ENCODE measurements at regions of chr1 and their contacts with region 1.

Region 1: DNA sequence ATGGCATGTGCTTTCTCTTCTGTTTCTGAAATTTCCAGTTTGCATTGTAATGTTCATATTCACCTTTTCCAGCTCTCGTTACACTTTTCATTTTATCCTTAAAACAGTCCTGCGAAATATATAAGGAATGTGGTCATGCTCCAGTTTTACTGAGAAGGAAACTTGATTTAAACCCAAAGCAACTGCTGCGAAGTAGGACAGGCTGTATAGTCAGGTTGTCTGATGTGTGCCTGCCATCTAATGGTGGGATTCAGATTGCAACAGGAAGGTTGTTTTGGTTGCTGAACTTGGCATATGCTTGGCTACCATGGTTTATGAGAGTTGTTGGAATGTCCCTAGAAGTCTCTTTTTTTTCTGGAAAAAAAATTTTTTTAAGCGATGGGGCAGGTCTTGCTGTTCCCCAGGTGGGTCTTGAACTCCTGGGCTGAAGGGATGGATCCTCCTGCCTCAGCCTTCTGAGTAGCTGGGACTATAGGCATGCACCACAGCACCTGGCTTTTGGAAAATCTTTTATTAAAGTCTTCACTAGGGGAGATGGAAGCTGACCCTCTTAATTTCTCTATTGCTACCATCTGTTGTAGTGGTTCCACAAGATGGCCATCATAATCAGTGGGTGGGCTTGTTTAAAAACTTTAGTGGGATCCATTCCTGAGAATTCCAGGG is 86.9 kb downstream of the UCK2 start:
- DNase-seq: peak; percentile 42 to 83 (median 64)
- ATAC-seq: peak; percentile 96
- H3K4me3 ChIP-seq: no peak overlapping the region
- H3K4me3 Mint-ChIP-seq: no peak overlapping the region
- H3K27ac ChIP-seq: no peak overlapping the region
- H3K27ac Mint-ChIP-seq: no peak overlapping the region
- H3K4me1 ChIP-seq: no peaks in the 10 kb centered on the region
- H3K4me1 Mint-ChIP-seq: peaks cover 2% of the 10 kb centered on the region
- H3K27me3 ChIP-seq: no peaks in the 10 kb centered on the region
- H3K27me3 Mint-ChIP-seq: no peaks in the 10 kb centered on the region
- CTCF ChIP-seq: peak; percentile 96

Region 2: GRCh38 chr1:165392634-165393571 is 521.4 kb before region 1 on chr1:
- CTCF ChIA-PET with region 1: interaction called, 26 read pairs
- POLR2A ChIA-PET with region 1: no interaction called
- intact Hi-C with region 1: loop called (anchors 1 kb)
- DNase-seq: peak; percentile 81 to 95 (median 90)
- ATAC-seq: peak; percentile 99
- H3K4me3 ChIP-seq: no peak overlapping the region
- H3K4me3 Mint-ChIP-seq: peak overlapping the region; percentile 43
- H3K27ac ChIP-seq: no peak overlapping the region
- H3K27ac Mint-ChIP-seq: peak overlapping the region; percentile 64
- H3K4me1 ChIP-seq: peaks cover 15% of the 10 kb centered on the region
- H3K4me1 Mint-ChIP-seq: peaks cover 16% of the 10 kb centered on the region
- H3K27me3 ChIP-seq: peaks cover 8 to 13% of the 10 kb centered on the region in 2 experiments
- H3K27me3 Mint-ChIP-seq: peaks cover 62% of the 10 kb centered on the region
- CTCF ChIP-seq: peak; percentile 92

Region 3: DNA sequence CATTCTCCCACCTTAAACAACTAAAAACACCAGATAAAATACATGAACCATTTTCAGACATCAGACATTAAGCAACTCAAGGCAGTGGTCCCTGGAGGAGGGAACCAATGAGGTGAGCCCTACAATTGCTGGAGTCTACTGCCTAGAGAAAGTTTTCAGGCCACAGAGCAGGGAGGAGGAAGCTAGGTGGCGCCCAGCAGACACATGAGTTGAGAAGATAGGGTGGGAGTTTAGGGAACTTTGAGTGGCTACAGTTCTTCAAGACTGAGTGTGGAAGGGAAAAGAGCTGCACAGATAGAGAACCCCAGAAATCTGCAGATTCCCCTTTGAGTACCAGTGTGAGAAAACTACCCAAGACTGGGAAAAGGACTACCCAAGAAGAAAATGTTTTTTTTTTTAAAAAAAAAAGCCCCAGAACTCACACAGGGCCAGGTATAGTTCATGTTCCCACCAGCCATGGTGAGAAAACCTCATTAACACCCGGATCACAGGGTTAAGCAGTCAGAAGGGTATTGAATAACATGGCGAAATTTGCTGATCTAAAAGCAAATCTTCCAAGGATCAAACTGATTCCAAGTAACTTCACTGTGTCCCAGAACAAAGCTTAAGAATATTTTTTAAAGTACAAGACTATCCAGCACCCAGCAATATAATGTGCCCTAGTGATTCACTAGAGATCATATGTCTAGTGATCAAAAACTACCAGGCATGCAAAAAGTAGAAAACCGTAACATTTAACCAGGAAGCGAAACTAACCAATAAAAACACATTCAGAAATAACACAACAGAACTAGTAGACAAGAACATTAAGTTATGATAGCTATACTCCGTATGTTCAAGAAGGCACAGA is 227.9 kb before region 1 on chr1:
- CTCF ChIA-PET with region 1: interaction called, 3 read pairs
- POLR2A ChIA-PET with region 1: no interaction called
- intact Hi-C with region 1: loop called in 1 of 2 experiments (anchors 2 kb)
- DNase-seq: peak in 2 of 9 experiments; percentile 35 to 37
- ATAC-seq: peak; percentile 36
- H3K4me3 ChIP-seq: no peak overlapping the region
- H3K4me3 Mint-ChIP-seq: no peak overlapping the region
- H3K27ac ChIP-seq: peak overlapping the region in 1 of 2 experiments; percentile 38
- H3K27ac Mint-ChIP-seq: peak overlapping the region; percentile 74
- H3K4me1 ChIP-seq: peaks cover 14% of the 10 kb centered on the region
- H3K4me1 Mint-ChIP-seq: peaks cover 46% of the 10 kb centered on the region
- H3K27me3 ChIP-seq: no peaks in the 10 kb centered on the region
- H3K27me3 Mint-ChIP-seq: no peaks in the 10 kb centered on the region
- CTCF ChIP-seq: no peak

Region 4: GRCh38 chr1:165768513-165769394 is 145.5 kb before region 1 on chr1 and contains the start of gene TMCO1:
- CTCF ChIA-PET with region 1: interaction called, 4 read pairs
- POLR2A ChIA-PET with region 1: no interaction called
- intact Hi-C with region 1: loop called (anchors 1 to 2 kb)
- DNase-seq: peak; percentile 84 to 99 (median 92)
- ATAC-seq: peak; percentile 93
- H3K4me3 ChIP-seq: peak within 1 kb of the TSS; percentile 85 to 93
- H3K4me3 Mint-ChIP-seq: peak within 1 kb of the TSS; percentile 99
- H3K27ac ChIP-seq: peak within 1 kb of the TSS; percentile 71 to 96
- H3K27ac Mint-ChIP-seq: peak within 1 kb of the TSS; percentile 99
- H3K4me1 ChIP-seq: peaks cover 50% of the 10 kb centered on the region
- H3K4me1 Mint-ChIP-seq: peaks cover 65% of the 10 kb centered on the region
- H3K27me3 ChIP-seq: no peaks in the 10 kb centered on the region
- H3K27me3 Mint-ChIP-seq: no peaks in the 10 kb centered on the region
- CTCF ChIP-seq: peak; percentile 24
- total RNA-seq, gene TMCO1: 30.5 to 33.5 TPM

Region 5: DNA sequence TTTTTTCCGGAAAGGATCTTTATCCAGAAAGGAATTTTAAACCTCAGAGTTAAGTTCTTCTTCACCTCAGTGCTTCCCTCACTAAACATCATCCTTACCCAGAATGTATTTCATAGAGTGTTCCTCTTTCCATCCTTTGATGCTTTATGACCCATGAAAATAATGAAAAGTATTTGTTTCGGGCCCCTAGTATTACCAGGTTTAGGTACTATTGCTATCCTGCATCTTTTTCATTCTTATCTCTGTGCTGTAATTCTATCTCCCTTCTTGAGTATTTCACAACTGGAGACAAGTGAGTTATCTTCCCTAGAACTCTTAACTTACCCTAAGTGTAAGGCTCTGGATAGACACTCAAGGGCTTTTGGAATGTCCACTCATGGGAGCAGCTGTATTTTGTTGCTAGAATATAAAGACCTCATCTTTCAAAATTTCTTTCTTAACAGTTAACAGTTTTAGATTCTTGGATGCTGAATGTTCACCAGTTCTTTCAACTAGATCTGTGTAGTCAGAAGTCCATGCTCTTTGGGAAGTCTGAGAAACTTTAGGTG is 60.7 kb before region 1 on chr1:
- CTCF ChIA-PET with region 1: no interaction called
- POLR2A ChIA-PET with region 1: no interaction called
- intact Hi-C with region 1: no loop called
- DNase-seq: no peak
- ATAC-seq: no peak
- H3K4me3 ChIP-seq: no peak overlapping the region
- H3K4me3 Mint-ChIP-seq: no peak overlapping the region
- H3K27ac ChIP-seq: no peak overlapping the region
- H3K27ac Mint-ChIP-seq: no peak overlapping the region
- H3K4me1 ChIP-seq: peaks cover 8% of the 10 kb centered on the region
- H3K4me1 Mint-ChIP-seq: peaks cover 20% of the 10 kb centered on the region
- H3K27me3 ChIP-seq: no peaks in the 10 kb centered on the region
- H3K27me3 Mint-ChIP-seq: no peaks in the 10 kb centered on the region
- CTCF ChIP-seq: no peak

Region 6: GRCh38 chr1:165898837-165899236 is 15.4 kb before region 1 on chr1:
- CTCF ChIA-PET with region 1: interaction called, 55 read pairs
- POLR2A ChIA-PET with region 1: no interaction called
- intact Hi-C with region 1: no loop called
- DNase-seq: no peak
- ATAC-seq: no peak
- H3K4me3 ChIP-seq: no peak overlapping the region
- H3K4me3 Mint-ChIP-seq: no peak overlapping the region
- H3K27ac ChIP-seq: no peak overlapping the region
- H3K27ac Mint-ChIP-seq: no peak overlapping the region
- H3K4me1 ChIP-seq: no peaks in the 10 kb centered on the region
- H3K4me1 Mint-ChIP-seq: peaks cover 3% of the 10 kb centered on the region
- H3K27me3 ChIP-seq: no peaks in the 10 kb centered on the region
- H3K27me3 Mint-ChIP-seq: no peaks in the 10 kb centered on the region
- CTCF ChIP-seq: no peak

Region 7: GRCh38 chr1:165936542-165936941 is 22.3 kb after region 1 on chr1:
- CTCF ChIA-PET with region 1: no interaction called
- POLR2A ChIA-PET with region 1: no interaction called
- intact Hi-C with region 1: no loop called
- DNase-seq: no peak
- ATAC-seq: no peak
- H3K4me3 ChIP-seq: no peak overlapping the region
- H3K4me3 Mint-ChIP-seq: no peak overlapping the region
- H3K27ac ChIP-seq: no peak overlapping the region
- H3K27ac Mint-ChIP-seq: no peak overlapping the region
- H3K4me1 ChIP-seq: no peaks in the 10 kb centered on the region
- H3K4me1 Mint-ChIP-seq: no peaks in the 10 kb centered on the region
- H3K27me3 ChIP-seq: no peaks in the 10 kb centered on the region
- H3K27me3 Mint-ChIP-seq: peaks cover 6% of the 10 kb centered on the region
- CTCF ChIP-seq: no peak